ENCODE measurements at regions of chr4 and their contacts with region 1.

Region 1: DNA sequence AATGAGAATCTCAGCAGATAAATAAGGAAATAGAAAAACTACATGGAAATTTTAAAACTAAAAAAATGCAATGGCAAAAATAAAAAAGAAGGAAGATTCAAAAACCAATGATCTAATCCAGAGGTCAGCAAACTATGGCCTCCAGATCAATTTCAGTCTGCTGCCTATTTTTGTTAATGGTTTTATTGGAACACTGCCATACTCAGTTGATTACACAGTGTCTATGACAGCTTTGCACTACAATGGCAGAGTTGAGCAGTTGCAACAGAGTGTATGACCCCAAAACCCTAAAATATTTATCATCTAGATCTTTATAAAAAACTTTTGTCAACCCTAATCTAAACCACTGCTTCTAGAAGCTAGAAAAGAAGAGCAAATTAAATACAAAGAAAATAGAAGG is 170.3 kb downstream of the RAB28 start:
- DNase-seq: no peak
- ATAC-seq: no peak
- H3K4me3 ChIP-seq: no peak overlapping the region
- H3K27ac ChIP-seq: no peak overlapping the region
- H3K4me1 ChIP-seq: no peaks in the 10 kb centered on the region
- H3K27me3 ChIP-seq: no peaks in the 10 kb centered on the region
- CTCF ChIP-seq: no peak

Region 2: GRCh38 chr4:13261486-13262257 is 52.2 kb before region 1 on chr4:
- intact Hi-C with region 1: loop called in 1 of 2 experiments (anchors 5 kb)
- DNase-seq: no peak
- ATAC-seq: no peak
- H3K4me3 ChIP-seq: no peak overlapping the region
- H3K27ac ChIP-seq: no peak overlapping the region
- H3K4me1 ChIP-seq: no peaks in the 10 kb centered on the region
- H3K27me3 ChIP-seq: no peaks in the 10 kb centered on the region
- CTCF ChIP-seq: no peak

Measured in left lung (tissue), 14 donors.